H1 (cell line): ENCODE measurements at regions of chr5 and their contacts with region 1.

Region 1: GRCh38 chr5:178113199-178113787 is at the start of gene N4BP3:
- DNase-seq: peak; percentile 44 to 88
- H3K4me3 ChIP-seq: peak within 1 kb of the TSS; percentile 54 to 98 (median 82)
- H3K27ac ChIP-seq: peak within 1 kb of the TSS; percentile 78; the same call in 1 of the 2 replicates
- H3K4me1 ChIP-seq: peaks cover 3 to 43% (median 31%) of the 10 kb centered on the region in 4 experiments
- H3K27me3 ChIP-seq: no peaks in the 10 kb centered on the region
- CTCF ChIP-seq: peak in 1 of 3 experiments; percentile 7; a peak in 1 of 4 replicates
- EP300 ChIP-seq: peak in 1 of 2 experiments; percentile 77; a peak in 1 of 3 replicates
- POLR2A ChIP-seq: peak in 1 of 2 experiments; percentile 67; a peak in 2 of 3 replicates
- RAD21 ChIP-seq: no peak; a peak in 1 of 4 replicates
- total RNA-seq, gene N4BP3: 36.0 and 39.2 TPM in 2 replicates

Region 2: GRCh38 chr5:177958696-177959095 is 154.6 kb before region 1 on chr5:
- CTCF ChIA-PET with region 1: no interaction called
- POLR2A ChIA-PET with region 1: no interaction called
- DNase-seq: no peak
- H3K4me3 ChIP-seq: peak overlapping the region in 1 of 4 experiments; percentile 27; a peak in 1 of 8 replicates
- H3K27ac ChIP-seq: no peak overlapping the region
- H3K4me1 ChIP-seq: peaks cover 8 to 16% (median 14%) of the 10 kb centered on the region in 4 experiments
- H3K27me3 ChIP-seq: no peaks in the 10 kb centered on the region
- CTCF ChIP-seq: no peak
- EP300 ChIP-seq: peak in 1 of 2 experiments; percentile 55; a peak in 1 of 3 replicates
- POLR2A ChIP-seq: no peak
- RAD21 ChIP-seq: no peak

Region 3: DNA sequence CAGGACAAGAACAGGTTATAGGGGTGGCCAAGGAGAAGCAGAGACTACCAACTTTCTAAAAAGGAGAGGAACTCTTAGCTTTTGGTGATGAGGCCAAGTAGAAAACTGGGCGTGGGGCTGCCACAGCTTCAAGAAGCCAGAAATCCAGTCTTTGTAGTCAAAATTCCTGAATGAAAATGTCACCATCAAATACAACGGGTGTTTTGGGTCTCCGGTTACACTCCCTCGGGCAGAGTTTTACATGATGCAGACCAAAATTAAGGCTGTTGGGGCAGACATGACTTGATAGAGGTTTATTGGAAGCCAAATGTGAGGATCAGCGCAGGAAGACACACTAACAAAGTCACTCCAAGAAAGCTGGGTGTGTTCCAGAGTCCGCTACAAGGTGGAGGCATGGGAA is 29.4 kb before region 1 on chr5:
- CTCF ChIA-PET with region 1: interaction called, 189 read pairs
- POLR2A ChIA-PET with region 1: interaction called, 13 read pairs
- DNase-seq: no peak
- H3K4me3 ChIP-seq: no peak overlapping the region
- H3K27ac ChIP-seq: no peak overlapping the region
- H3K4me1 ChIP-seq: peaks cover 0 to 5% (median 3%) of the 10 kb centered on the region in 4 experiments; a peak in 1 of 7 replicates
- H3K27me3 ChIP-seq: no peaks in the 10 kb centered on the region
- CTCF ChIP-seq: no peak
- EP300 ChIP-seq: no peak
- POLR2A ChIP-seq: no peak
- RAD21 ChIP-seq: no peak

Region 4: DNA sequence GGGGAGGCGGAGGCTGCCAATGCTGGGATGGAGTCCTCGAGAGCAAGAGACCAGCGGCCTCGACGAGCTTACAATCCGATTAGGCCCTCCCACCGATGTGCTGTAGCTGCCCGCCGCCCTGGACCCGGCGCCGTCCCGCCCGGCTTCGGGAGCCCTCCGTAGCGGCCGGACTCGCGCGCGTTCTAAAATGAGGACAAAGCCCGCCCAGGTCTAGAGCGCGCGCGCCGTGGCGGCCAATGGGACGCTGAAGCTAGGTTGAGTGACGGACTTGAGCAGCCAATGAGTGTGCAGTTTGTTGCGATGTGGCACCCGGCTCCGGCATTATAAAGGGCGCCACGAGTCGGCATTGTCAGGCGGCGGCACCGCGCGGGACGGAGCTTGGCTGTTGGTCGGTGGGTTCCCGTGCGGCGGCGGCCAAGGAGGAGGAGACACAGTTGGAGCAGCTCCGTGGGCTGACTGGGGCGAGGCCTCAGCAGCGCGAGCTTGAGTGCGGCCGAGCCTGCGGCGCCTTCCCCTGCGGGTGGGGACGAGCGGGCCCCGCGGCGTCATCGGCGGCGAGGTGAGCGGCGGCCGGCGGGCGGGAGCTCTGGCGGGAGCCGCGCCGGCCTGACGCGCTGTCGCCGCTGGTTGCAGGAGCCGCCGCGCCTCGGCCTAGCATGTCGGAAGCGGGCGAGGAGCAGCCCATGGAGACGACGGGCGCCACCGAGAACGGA is 91.0 kb after region 1 on chr5 and contains the start of gene HNRNPAB:
- CTCF ChIA-PET with region 1: no interaction called
- POLR2A ChIA-PET with region 1: interaction called, 13 read pairs
- DNase-seq: peak; percentile 85 to 97
- H3K4me3 ChIP-seq: peak within 1 kb of the TSS; percentile 93 to 100 (median 100)
- H3K27ac ChIP-seq: peak within 1 kb of the TSS; percentile 95
- H3K4me1 ChIP-seq: peaks cover 0 to 10% (median 4%) of the 10 kb centered on the region in 4 experiments; a peak in 5 of 7 replicates
- H3K27me3 ChIP-seq: no peaks in the 10 kb centered on the region
- CTCF ChIP-seq: no peak
- EP300 ChIP-seq: 0 out of 3 replicates have a peak, but pooled peaks of 1 of the 2 experiments have one; percentile 8
- POLR2A ChIP-seq: peak; percentile 99 to 100
- RAD21 ChIP-seq: no peak
- total RNA-seq, gene HNRNPAB: 556 and 563 TPM in 2 replicates

Region 5: DNA sequence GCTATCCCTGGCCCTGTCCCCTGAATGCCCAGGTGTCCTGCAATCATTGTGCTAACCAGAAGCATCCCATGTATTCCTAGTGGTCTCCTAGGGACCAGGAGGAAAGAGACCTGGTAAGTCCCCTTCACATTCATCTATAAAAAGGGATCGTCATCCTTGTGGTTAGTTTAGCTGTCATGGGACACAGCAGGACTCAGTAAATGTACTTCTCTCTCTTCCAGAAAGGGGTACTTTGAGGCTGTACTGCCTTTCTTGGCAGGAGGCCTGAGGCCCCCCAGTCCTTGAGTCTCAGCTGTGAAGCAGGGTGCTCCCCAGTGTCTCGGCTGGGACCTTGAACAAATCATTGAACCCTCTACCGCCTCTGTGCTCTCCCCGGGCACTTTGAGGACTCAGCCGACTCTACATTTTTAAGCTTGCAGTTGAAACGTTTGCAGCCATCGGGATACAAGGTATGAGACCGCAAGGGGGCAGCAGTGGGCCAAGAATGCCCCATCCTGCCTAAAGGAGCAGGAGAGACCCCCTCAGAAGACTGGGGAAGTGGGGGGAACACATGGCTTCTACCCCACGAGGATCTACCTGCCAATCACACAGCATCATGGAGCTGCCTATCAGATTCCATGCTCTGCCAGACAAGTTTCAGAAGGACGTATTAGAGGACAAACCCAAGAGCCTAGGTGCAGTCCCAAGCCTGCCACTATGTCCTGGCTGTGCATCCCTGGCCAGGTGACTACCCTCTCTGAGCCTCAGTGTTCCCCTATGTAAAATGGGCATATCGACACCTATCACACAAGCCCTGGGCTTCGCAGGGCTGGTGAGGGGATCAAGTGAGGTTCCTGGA is 121.7 kb after region 1 on chr5:
- CTCF ChIA-PET with region 1: no interaction called
- POLR2A ChIA-PET with region 1: no interaction called
- DNase-seq: peak; percentile 78 to 97
- H3K4me3 ChIP-seq: no peak overlapping the region
- H3K27ac ChIP-seq: no peak overlapping the region
- H3K4me1 ChIP-seq: peaks cover 0 to 19% (median 12%) of the 10 kb centered on the region in 4 experiments; a peak in 6 of 7 replicates
- H3K27me3 ChIP-seq: no peaks in the 10 kb centered on the region
- CTCF ChIP-seq: peak in 2 of 3 experiments; percentile 80 to 86; a peak in 3 of 4 replicates
- EP300 ChIP-seq: no peak
- POLR2A ChIP-seq: no peak
- RAD21 ChIP-seq: peak; percentile 86 to 88